K562 (cell line): ENCODE measurements at regions of chr4 and their contacts with region 1.

Region 1: GRCh38 chr4:80365928-80366327 is 30.4 kb downstream of the CFAP299 start:
- DNase-seq: peak in 3 of 4 experiments; percentile 17 to 53 (median 41)
- ATAC-seq: peak; percentile 87
- H3K4me3 ChIP-seq: no peak overlapping the region
- H3K27ac ChIP-seq: no peak overlapping the region
- H3K4me1 ChIP-seq: no peaks in the 10 kb centered on the region
- H3K27me3 ChIP-seq: no peaks in the 10 kb centered on the region
- CTCF ChIP-seq: peak; percentile 69 to 76 (median 73)
- EP300 ChIP-seq: no peak
- POLR2A ChIP-seq: no peak
- RAD21 ChIP-seq: peak; percentile 91 to 93

Region 2: DNA sequence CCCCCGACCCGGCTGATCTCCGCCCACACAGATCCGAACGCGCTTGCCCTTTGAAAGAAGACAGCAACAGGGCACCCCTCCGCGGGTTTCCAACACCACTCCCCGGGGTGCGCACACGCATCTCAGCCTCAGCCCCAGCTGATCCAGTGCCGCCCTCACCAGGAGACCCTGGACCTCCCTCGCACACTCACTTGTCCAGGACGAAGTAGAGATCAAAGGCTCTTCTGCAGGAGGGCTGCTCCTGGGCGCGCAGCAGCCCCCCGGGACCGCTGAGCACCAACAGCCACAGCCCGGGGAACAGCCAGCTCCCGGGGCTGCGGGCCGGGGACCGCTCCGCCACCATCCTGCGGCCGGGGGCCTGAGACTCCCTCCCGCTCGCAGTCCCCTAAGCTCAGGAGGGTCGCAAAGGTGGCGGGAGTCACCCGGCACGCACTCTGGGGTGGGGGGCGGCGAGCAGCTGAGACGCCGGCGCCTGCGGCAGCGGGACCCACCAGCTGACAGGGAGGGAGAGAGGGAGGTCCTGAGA is 293.6 kb before region 1 on chr4:
- CTCF ChIA-PET with region 1: no interaction called
- POLR2A ChIA-PET with region 1: no interaction called
- in situ Hi-C with region 1: no loop called
- intact Hi-C with region 1: no loop called
- DNase-seq: peak; percentile 36 to 66 (median 48)
- ATAC-seq: peak; percentile 68
- H3K4me3 ChIP-seq: peak overlapping the region; percentile 89
- H3K27ac ChIP-seq: peak overlapping the region; percentile 87
- H3K4me1 ChIP-seq: peaks cover 12 to 27% of the 10 kb centered on the region in 2 experiments; a peak in 4 of 5 replicates
- H3K27me3 ChIP-seq: no peaks in the 10 kb centered on the region
- CTCF ChIP-seq: no peak
- EP300 ChIP-seq: no peak
- POLR2A ChIP-seq: no peak; the same call in 1 of the 2 replicates
- RAD21 ChIP-seq: peak in 1 of 2 experiments; percentile 3; a peak in 1 of 4 replicates

Region 3: DNA sequence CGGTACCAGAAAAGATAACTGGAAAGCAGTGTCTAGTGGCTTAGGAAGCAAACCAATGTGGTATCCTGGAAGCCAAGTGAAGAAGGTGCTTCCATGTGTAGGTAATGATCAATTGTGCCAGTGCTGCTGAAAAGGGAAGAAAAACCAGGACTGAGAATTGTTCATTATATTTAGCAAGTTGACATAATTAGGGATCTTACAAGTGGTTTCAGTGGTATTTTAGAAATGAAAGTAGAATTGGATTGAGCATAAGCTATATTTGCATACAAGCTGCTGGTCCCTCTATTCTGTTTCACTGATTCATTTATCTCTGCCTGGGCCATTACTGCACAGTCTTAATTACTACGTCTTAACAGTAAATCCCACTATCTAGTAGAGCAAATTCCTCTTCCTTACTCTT is 136.3 kb before region 1 on chr4:
- CTCF ChIA-PET with region 1: no interaction called
- POLR2A ChIA-PET with region 1: no interaction called
- in situ Hi-C with region 1: no loop called
- intact Hi-C with region 1: no loop called
- DNase-seq: no peak
- ATAC-seq: no peak
- H3K4me3 ChIP-seq: no peak overlapping the region
- H3K27ac ChIP-seq: no peak overlapping the region
- H3K4me1 ChIP-seq: peaks cover 4 to 18% of the 10 kb centered on the region in 2 experiments; a peak in 4 of 5 replicates
- H3K27me3 ChIP-seq: no peaks in the 10 kb centered on the region
- CTCF ChIP-seq: no peak
- EP300 ChIP-seq: no peak
- POLR2A ChIP-seq: no peak
- RAD21 ChIP-seq: no peak

Region 4: GRCh38 chr4:80489798-80490197 is 123.9 kb after region 1 on chr4:
- CTCF ChIA-PET with region 1: no interaction called
- POLR2A ChIA-PET with region 1: no interaction called
- in situ Hi-C with region 1: no loop called
- intact Hi-C with region 1: loop called (anchors 10 kb)
- DNase-seq: no peak
- ATAC-seq: no peak
- H3K4me3 ChIP-seq: no peak overlapping the region
- H3K27ac ChIP-seq: no peak overlapping the region
- H3K4me1 ChIP-seq: no peaks in the 10 kb centered on the region
- H3K27me3 ChIP-seq: no peaks in the 10 kb centered on the region
- CTCF ChIP-seq: no peak
- EP300 ChIP-seq: no peak
- POLR2A ChIP-seq: no peak
- RAD21 ChIP-seq: no peak

Region 5: GRCh38 chr4:80788798-80789197 is 422.9 kb after region 1 on chr4:
- CTCF ChIA-PET with region 1: no interaction called
- POLR2A ChIA-PET with region 1: no interaction called
- in situ Hi-C with region 1: loop called (anchors 25 kb)
- intact Hi-C with region 1: no loop called
- DNase-seq: peak in 1 of 4 experiments; percentile 3
- ATAC-seq: no peak
- H3K4me3 ChIP-seq: no peak overlapping the region
- H3K27ac ChIP-seq: no peak overlapping the region
- H3K4me1 ChIP-seq: no peaks in the 10 kb centered on the region
- H3K27me3 ChIP-seq: no peaks in the 10 kb centered on the region
- CTCF ChIP-seq: no peak
- EP300 ChIP-seq: no peak
- POLR2A ChIP-seq: no peak
- RAD21 ChIP-seq: no peak

Region 6: GRCh38 chr4:80926446-80926845 is 560.5 kb after region 1 on chr4:
- CTCF ChIA-PET with region 1: no interaction called
- POLR2A ChIA-PET with region 1: no interaction called
- in situ Hi-C with region 1: no loop called
- intact Hi-C with region 1: no loop called
- DNase-seq: no peak
- ATAC-seq: no peak
- H3K4me3 ChIP-seq: no peak overlapping the region
- H3K27ac ChIP-seq: no peak overlapping the region
- H3K4me1 ChIP-seq: no peaks in the 10 kb centered on the region
- H3K27me3 ChIP-seq: no peaks in the 10 kb centered on the region
- CTCF ChIP-seq: no peak
- EP300 ChIP-seq: no peak
- POLR2A ChIP-seq: no peak
- RAD21 ChIP-seq: no peak

Region 7: GRCh38 chr4:81040012-81040659 is 674.2 kb after region 1 on chr4:
- CTCF ChIA-PET with region 1: interaction called, 4 read pairs
- POLR2A ChIA-PET with region 1: no interaction called
- in situ Hi-C with region 1: no loop called
- intact Hi-C with region 1: loop called (anchors 1 kb)
- DNase-seq: peak; percentile 9 to 31 (median 16)
- ATAC-seq: peak; percentile 47; the same call in 1 of the 3 replicates
- H3K4me3 ChIP-seq: no peak overlapping the region
- H3K27ac ChIP-seq: no peak overlapping the region
- H3K4me1 ChIP-seq: no peaks in the 10 kb centered on the region
- H3K27me3 ChIP-seq: no peaks in the 10 kb centered on the region
- CTCF ChIP-seq: peak; percentile 41 to 84 (median 65); a peak in 5 of 6 replicates
- EP300 ChIP-seq: no peak
- POLR2A ChIP-seq: no peak
- RAD21 ChIP-seq: peak; percentile 75 to 81

Region 8: GRCh38 chr4:81351654-81352445 is 985.9 kb after region 1 on chr4:
- CTCF ChIA-PET with region 1: no interaction called
- POLR2A ChIA-PET with region 1: no interaction called
- in situ Hi-C with region 1: loop called (anchors 10 kb)
- intact Hi-C with region 1: loop called (anchors 5 kb)
- DNase-seq: peak; percentile 37 to 79 (median 60)
- ATAC-seq: peak; percentile 93
- H3K4me3 ChIP-seq: no peak overlapping the region
- H3K27ac ChIP-seq: no peak overlapping the region
- H3K4me1 ChIP-seq: no peaks in the 10 kb centered on the region
- H3K27me3 ChIP-seq: no peaks in the 10 kb centered on the region
- CTCF ChIP-seq: peak; percentile 74 to 80 (median 79)
- EP300 ChIP-seq: no peak
- POLR2A ChIP-seq: no peak
- RAD21 ChIP-seq: peak; percentile 58 to 64